Activated CD4-positive, alpha-beta T cell treated with anti-CD3 and anti-CD28 coated beads, Interleukin-2, amount 10 ng/mL, durations not matched to agents 24 days and 14 days (primary cell): ENCODE measurements at regions of chr1 and their contacts with region 1.

Region 1: DNA sequence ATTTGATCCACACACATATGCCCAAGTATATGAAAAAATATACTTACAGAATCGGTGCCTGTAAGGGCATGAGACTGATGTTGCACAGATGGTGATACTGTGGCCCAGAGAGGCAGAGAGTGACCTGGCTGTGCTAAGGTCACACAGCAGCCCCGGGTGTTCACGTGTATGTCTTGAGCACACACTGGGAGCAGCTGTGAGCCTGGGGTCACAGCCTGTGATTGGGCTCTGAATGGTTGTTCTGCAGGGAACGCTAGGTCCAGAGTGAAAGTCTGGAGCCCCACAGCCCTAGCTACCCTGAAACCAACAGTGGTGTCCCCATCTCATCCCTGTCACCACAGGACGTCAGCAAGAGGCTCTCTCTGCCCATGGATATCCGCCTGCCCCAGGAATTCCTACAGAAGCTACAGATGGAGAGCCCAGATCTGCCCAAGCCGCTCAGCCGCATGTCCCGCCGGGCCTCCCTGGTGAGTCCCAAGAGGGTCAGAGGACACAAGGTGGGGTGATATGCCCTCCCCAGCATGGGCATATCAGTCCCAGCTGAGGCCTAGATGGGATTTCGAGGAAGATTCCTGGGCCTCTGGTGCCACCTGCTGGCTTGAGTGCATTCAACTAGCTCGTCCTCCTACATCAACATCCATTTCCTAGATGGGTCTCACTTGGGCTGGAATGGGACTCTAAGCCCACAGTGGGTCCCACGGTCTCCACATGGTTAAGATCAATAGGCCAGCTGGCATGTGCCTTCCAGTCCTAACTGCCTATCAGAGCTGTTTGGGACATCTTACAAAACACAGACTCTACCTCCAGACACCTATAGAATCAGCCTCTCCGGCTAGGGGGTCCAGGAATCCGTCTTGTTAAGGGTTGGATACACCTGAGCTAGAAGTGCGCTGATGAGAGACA is 19.7 kb downstream of the CDK18 start:
- DNase-seq: peak; percentile 90
- H3K4me3 Mint-ChIP-seq: no peak overlapping the region
- H3K27ac Mint-ChIP-seq: no peak overlapping the region
- H3K4me1 Mint-ChIP-seq: no peaks in the 10 kb centered on the region
- H3K27me3 Mint-ChIP-seq: no peaks in the 10 kb centered on the region

Region 2: DNA sequence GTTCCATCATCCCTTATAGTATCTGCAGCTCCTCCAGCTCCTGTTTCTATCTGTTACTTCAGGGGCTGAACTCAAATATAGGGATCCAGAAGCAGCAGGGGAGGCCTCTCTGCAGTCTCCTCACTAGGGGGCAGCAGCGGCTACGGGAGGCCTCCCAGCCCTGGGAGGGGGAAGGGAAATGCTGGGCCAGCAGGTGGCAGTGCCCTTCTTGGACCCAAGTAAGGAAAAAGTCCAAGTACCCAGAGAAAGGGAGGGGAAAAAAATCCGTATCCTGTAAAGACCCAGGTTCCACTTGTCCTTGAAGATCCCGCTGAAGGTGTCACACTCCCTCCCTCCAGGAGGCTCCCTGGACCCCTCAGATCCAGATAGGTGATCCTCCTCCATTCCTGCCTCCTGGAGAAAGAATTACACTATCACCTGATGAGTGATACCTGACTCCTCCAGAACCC is 188.5 kb before region 1 on chr1:
- intact Hi-C with region 1: loop called (anchors 2 kb)
- DNase-seq: peak; percentile 93
- H3K4me3 Mint-ChIP-seq: no peak overlapping the region
- H3K27ac Mint-ChIP-seq: no peak overlapping the region
- H3K4me1 Mint-ChIP-seq: no peaks in the 10 kb centered on the region
- H3K27me3 Mint-ChIP-seq: peaks cover 38% of the 10 kb centered on the region

Region 3: DNA sequence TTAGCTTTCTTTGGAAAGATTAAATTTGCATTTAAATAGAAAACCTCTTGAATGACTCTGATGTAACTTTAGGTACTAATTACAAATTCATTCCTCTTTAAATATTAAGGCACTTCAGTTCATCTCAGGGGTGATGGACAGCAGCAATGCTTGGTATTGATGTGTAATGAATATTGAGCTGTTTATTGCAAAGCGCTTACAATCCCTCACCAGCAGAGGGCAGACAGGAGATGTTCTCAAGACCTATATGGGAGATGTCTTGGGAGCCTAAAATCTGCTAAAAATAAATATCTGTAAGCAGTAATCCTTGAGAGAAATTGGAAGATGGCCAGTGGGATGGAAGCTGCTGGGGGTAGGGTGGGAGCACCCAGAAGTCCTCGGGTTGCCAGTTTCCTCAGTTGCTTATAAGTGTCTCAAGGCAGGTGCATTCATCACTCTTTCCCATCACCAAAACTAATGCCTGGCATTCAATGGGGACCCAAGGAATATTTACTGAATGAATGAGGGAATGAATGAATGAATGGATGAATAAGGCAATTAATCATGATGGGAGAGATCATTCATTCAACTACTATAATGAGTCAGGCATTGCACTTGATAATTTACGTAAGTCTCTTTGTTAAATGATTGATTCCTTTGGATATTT is 169.8 kb before region 1 on chr1:
- intact Hi-C with region 1: loop called (anchors 2 kb)
- DNase-seq: peak; percentile 87
- H3K4me3 Mint-ChIP-seq: no peak overlapping the region
- H3K27ac Mint-ChIP-seq: no peak overlapping the region
- H3K4me1 Mint-ChIP-seq: no peaks in the 10 kb centered on the region
- H3K27me3 Mint-ChIP-seq: peaks cover 26% of the 10 kb centered on the region

Region 4: DNA sequence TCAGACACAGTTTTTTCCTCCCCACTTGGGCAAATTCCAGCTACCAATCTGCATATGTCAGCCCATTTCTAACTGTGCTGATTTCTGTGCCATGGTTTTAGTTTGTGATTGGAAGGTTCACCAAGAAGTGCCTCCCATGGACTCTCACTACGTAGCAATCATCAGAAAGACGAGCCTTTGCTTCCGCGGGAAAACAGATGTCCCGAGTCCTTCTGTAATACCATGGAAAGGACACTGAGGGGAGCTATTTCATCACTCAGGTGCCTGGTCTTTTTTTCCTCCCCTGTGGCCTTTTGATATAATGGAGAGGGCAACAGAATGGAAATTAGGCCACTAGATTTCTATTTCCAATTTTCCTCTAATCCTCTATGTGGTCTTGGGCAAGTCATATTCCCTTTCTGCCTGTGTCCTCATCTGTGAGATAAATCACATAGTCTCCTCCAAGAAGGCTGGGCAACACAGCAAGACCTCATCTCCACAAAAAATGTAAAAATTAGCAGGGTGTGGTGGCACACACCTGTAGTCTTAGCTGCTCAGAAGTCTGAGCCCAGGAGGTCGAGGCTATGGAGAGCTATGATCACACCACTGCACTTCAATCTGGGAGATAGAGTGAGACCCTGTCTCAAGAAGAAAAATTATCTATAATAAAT is 127.0 kb before region 1 on chr1:
- intact Hi-C with region 1: loop called (anchors 2 kb)
- DNase-seq: peak; percentile 71
- H3K4me3 Mint-ChIP-seq: no peak overlapping the region
- H3K27ac Mint-ChIP-seq: no peak overlapping the region
- H3K4me1 Mint-ChIP-seq: no peaks in the 10 kb centered on the region
- H3K27me3 Mint-ChIP-seq: peaks cover 30% of the 10 kb centered on the region

Region 5: DNA sequence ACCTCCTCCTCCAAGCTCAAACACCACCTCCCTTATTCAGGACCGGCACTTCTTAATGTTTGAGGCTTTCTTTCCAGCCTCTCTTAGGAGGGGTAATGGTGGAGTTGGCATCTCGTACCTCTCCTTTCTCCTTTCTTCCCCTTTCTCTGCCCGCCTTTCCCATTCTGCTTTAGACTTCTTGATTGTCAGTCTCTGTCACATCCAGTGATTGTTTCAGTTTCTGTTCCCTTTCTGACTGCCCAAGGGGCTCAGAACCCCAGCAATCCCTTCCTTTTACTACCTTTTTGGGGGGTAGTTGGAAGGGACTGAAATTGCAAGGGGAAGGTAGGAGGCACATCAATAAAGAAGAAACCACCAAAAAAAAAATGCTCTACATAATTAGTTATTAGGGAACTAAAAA is 102.1 kb after region 1 on chr1:
- intact Hi-C with region 1: no loop called
- DNase-seq: no peak
- H3K4me3 Mint-ChIP-seq: peak overlapping the region; percentile 53
- H3K27ac Mint-ChIP-seq: peak overlapping the region; percentile 21
- H3K4me1 Mint-ChIP-seq: peaks cover 42% of the 10 kb centered on the region
- H3K27me3 Mint-ChIP-seq: no peaks in the 10 kb centered on the region